Dorsolateral prefrontal cortex (tissue), 120 donors: ENCODE measurements at regions of chr6 and their contacts with region 1.

Region 1: GRCh38 chr6:125749173-125749864 is at the start of gene HEY2:
- DNase-seq: peak; percentile 87 to 97 (median 92)
- H3K4me3 ChIP-seq: peak within 1 kb of the TSS; percentile 51 to 91 (median 78)
- H3K27ac ChIP-seq: peak within 1 kb of the TSS; percentile 81 to 99 (median 96)
- H3K27me3 ChIP-seq: peaks cover 0 to 62% (median 13%) of the 10 kb centered on the region in 45 donors
- CTCF ChIP-seq: peak in 19 of 56 donors; percentile 4 to 52 (median 21)
- total RNA-seq, gene HEY2: 3.3 to 16.5 (median 7.2) TPM

Region 2: GRCh38 chr6:125584468-125585029 is 164.8 kb before region 1 on chr6:
- intact Hi-C with region 1: loop called (anchors 2 to 5 kb)
- DNase-seq: peak in 9 of 10 donors; percentile 59 to 87 (median 82)
- H3K4me3 ChIP-seq: peak overlapping the region in 10 of 59 donors; percentile 0 to 27 (median 22)
- H3K27ac ChIP-seq: peak overlapping the region in 50 of 59 donors; percentile 4 to 85 (median 58)
- H3K27me3 ChIP-seq: peaks cover 0 to 4% (median 0%) of the 10 kb centered on the region in 45 donors
- CTCF ChIP-seq: peak; percentile 24 to 82 (median 61)

Region 3: DNA sequence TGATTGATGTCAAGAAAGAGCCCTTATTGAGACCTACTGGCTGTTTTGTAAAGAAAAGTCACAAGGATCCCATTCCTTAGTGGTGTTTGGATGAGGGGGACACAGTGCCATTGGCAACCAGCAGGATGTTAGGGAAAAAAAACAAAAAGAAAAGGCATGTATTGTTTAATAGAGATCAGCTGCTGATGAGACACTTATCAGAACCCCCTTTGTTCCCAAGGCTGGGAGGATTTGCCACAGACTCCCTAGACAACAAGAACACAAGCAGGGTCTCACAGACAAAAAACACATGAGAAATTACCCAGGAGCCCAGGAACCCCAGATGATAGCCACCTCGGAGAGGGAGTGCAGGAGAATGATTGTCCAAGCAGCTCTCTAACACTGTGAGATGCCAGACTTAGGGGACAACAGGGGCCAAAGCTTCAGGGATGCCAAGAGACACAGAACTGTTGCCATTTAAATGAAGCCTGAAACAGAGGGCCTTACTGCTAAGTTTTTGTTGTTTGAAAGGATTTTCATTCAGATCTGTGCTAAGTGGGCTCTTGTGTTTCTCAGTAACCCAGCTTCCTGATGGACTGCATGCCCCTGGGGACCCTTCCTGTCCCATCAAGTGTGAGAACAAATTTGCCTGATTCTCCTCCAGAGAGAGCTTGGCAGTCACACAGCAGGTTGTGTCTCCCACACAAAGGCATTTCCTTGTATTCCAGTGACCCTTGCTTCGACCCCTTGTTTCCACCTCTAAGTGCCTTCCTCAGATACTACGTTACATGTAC is 48.6 kb before region 1 on chr6:
- intact Hi-C with region 1: loop called (anchors 2 to 5 kb)
- DNase-seq: peak in 3 of 10 donors; percentile 36 to 50 (median 41)
- H3K4me3 ChIP-seq: peak overlapping the region in 4 of 59 donors; percentile 13 to 44 (median 23)
- H3K27ac ChIP-seq: peak overlapping the region; percentile 67 to 96 (median 90)
- H3K27me3 ChIP-seq: no peaks in the 10 kb centered on the region
- CTCF ChIP-seq: peak in 5 of 56 donors; percentile 7 to 20 (median 11)

Region 4: DNA sequence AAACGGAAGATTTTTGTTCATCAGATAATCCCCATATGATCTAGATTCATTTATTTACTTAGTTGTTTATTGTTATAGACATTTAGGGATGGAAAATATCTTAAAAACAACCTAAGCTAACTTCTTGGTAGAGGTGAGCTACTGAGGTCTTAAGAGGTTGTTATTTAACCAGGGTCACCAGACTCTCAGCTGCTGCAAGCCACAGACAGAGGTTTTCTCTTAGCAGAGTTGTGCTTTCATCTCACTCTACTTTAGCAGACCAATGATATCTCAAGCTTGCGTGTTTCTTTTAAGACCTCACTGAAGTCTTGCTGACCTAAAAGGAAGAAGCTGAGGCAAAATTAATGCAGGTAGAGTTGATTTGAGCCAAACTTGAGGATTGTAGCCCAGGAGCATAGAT is 85.0 kb after region 1 on chr6:
- intact Hi-C with region 1: no loop called
- DNase-seq: no peak
- H3K4me3 ChIP-seq: no peak overlapping the region
- H3K27ac ChIP-seq: peak overlapping the region in 45 of 59 donors; percentile 3 to 98 (median 63)
- H3K27me3 ChIP-seq: no peaks in the 10 kb centered on the region
- CTCF ChIP-seq: no peak